ENCODE measurements at regions of chr11 and their contacts with region 1.

Region 1: GRCh38 chr11:122633219-122633829 is 22.2 kb upstream of the UBASH3B start:
- DNase-seq: peak; percentile 56
- CTCF ChIP-seq: peak; percentile 57

Region 2: DNA sequence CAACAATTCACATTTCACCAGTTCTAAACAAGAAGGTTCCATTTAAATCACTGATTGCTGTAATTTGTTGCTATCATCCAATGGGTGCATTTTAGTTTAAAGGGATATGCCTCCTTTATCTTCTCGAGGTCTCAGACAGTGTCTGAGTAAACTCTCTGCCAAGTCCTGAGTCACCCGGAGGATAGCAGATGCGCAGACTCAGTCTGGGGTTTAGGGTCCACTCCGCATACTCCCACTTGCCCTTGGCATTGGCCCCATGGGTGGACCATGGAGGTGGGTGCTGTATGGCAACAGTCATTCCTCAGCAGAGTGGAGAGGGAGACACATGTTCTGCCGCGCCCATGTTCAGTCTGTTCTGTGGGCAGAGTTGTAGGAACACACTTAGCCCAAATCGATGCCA is 139.6 kb after region 1 on chr11:
- in situ Hi-C with region 1: loop called (anchors 5 kb)
- DNase-seq: no peak
- CTCF ChIP-seq: no peak